Naive thymus-derived CD4-positive, alpha-beta T cell (primary cell): ENCODE measurements at regions of chr12 and their contacts with region 1.

Region 1: GRCh38 chr12:114447274-114447716 is 41.4 kb upstream of the TBX5 start:
- DNase-seq: no peak
- ATAC-seq: no peak
- H3K4me3 ChIP-seq: no peak overlapping the region
- H3K4me3 Mint-ChIP-seq: no peak overlapping the region
- H3K27ac ChIP-seq: no peak overlapping the region
- H3K27ac Mint-ChIP-seq: no peak overlapping the region
- H3K4me1 ChIP-seq: no peaks in the 10 kb centered on the region
- H3K4me1 Mint-ChIP-seq: no peaks in the 10 kb centered on the region
- H3K27me3 ChIP-seq: peaks cover 3 to 7% of the 10 kb centered on the region in 2 donors
- H3K27me3 Mint-ChIP-seq: peaks cover 74 to 85% (median 84%) of the 10 kb centered on the region in 5 donors

Region 2: GRCh38 chr12:113467502-113468364 is 979.6 kb before region 1 on chr12:
- CTCF ChIA-PET with region 1: no interaction called
- POLR2A ChIA-PET with region 1: no interaction called
- intact Hi-C with region 1: loop called in 1 of 2 experiments (anchors 5 kb)
- DNase-seq: no peak
- ATAC-seq: no peak
- H3K4me3 ChIP-seq: no peak overlapping the region
- H3K4me3 Mint-ChIP-seq: peak overlapping the region in 4 of 10 donors; percentile 16 to 59 (median 43)
- H3K27ac ChIP-seq: no peak overlapping the region
- H3K27ac Mint-ChIP-seq: peak overlapping the region in 1 of 9 donors; percentile 23
- H3K4me1 ChIP-seq: peaks cover 6 to 17% of the 10 kb centered on the region in 2 donors
- H3K4me1 Mint-ChIP-seq: peaks cover 10 to 32% (median 25%) of the 10 kb centered on the region in 7 donors
- H3K27me3 ChIP-seq: peaks cover 5% of the 10 kb centered on the region in 2 donors
- H3K27me3 Mint-ChIP-seq: peaks cover 50 to 84% (median 69%) of the 10 kb centered on the region in 5 donors

Region 3: GRCh38 chr12:114684098-114684869 is 237.0 kb after region 1 on chr12 and contains the start of gene TBX3:
- CTCF ChIA-PET with region 1: no interaction called
- POLR2A ChIA-PET with region 1: no interaction called
- intact Hi-C with region 1: loop called in 1 of 2 experiments (anchors 10 kb)
- DNase-seq: peak in 7 of 9 donors; percentile 24 to 58 (median 32)
- ATAC-seq: peak; percentile 67
- H3K4me3 ChIP-seq: peak within 1 kb of the TSS; percentile 50
- H3K4me3 Mint-ChIP-seq: peak within 1 kb of the TSS; percentile 81 to 94 (median 90)
- H3K27ac ChIP-seq: no peak within 1 kb of the TSS
- H3K27ac Mint-ChIP-seq: peak within 1 kb of the TSS in 6 of 9 donors; percentile 1 to 85 (median 65)
- H3K4me1 ChIP-seq: peaks cover 0 to 8% of the 10 kb centered on the region in 2 donors
- H3K4me1 Mint-ChIP-seq: peaks cover 13 to 54% (median 37%) of the 10 kb centered on the region in 7 donors
- H3K27me3 ChIP-seq: peaks cover 0 to 36% of the 10 kb centered on the region in 2 donors
- H3K27me3 Mint-ChIP-seq: peaks cover 85 to 95% (median 91%) of the 10 kb centered on the region in 5 donors
- total RNA-seq, gene TBX3: not detected